Right ventricle myocardium inferior (tissue), 1 donor: ENCODE measurements at regions of chr13 and their contacts with region 1.

Region 1: DNA sequence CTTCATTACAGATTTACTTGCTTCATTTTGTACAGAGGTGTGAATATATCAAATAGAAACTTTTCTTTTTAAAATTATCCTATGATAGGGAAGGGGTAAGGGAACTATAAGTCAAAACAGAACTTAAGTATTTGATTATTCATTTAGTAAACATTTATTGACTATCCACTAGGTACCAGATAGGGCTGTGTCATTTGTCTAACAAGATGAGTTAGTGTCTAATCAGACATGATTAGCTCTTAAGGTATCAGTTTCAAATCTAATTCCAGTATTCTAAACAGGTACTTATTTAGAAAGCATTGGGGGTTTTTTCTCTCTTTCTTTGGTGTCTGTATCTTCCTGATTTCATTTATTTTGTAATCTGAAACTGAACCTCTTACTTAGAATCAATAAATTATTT is 32.2 kb downstream of the CDADC1 start:
- DNase-seq: no peak
- ATAC-seq: no peak

Region 2: GRCh38 chr13:48585456-48585840 is 694.4 kb before region 1 on chr13:
- intact Hi-C with region 1: loop called (anchors 5 kb)
- DNase-seq: no peak
- ATAC-seq: peak; percentile 83

Region 3: GRCh38 chr13:49110122-49110912 is 169.6 kb before region 1 on chr13:
- intact Hi-C with region 1: loop called (anchors 10 kb)
- DNase-seq: peak; percentile 90
- ATAC-seq: peak; percentile 84